ENCODE measurements at regions of chr20 and their contacts with region 1.

Region 1: GRCh38 chr20:51206032-51206662 is 183.2 kb upstream of the KCNG1 start:
- DNase-seq: no peak
- H3K4me3 ChIP-seq: no peak overlapping the region
- H3K27ac ChIP-seq: no peak overlapping the region
- H3K4me1 ChIP-seq: no peaks in the 10 kb centered on the region
- H3K27me3 ChIP-seq: no peaks in the 10 kb centered on the region
- CTCF ChIP-seq: no peak
- POLR2A ChIP-seq: no peak

Region 2: DNA sequence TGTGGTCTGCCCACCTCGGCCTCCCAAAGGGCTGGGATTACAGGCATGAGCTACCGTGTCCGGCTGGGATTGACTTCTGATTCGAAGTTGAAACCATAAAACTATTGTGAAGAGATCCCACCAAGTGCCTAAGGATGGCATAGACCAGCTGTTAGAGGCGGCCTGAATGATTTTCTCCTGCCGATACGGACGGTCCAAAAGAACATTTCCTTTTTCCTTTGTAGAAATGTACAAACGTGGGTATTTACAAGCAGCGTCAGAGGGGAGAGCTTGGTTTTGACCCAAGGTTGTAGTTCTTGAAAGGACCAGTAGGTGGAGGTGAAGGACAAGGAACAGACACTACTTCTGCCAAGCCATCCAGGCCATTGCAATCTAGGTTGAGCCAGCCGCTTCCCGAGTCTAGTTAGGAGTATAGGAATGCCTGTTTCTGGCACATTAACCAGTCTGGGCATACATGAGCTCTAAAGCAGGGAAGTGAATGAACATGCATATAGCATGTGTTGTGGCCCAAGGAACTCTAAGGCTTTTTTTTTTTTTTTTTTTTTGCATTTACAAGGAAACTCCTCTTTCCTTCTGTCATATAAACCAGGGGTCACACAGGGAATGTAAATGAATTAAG is 218.4 kb before region 1 on chr20:
- intact Hi-C with region 1: loop called (anchors 10 kb)
- DNase-seq: peak; percentile 61 to 73
- H3K4me3 ChIP-seq: no peak overlapping the region
- H3K27ac ChIP-seq: no peak overlapping the region
- H3K4me1 ChIP-seq: no peaks in the 10 kb centered on the region
- H3K27me3 ChIP-seq: peaks cover 0 to 5% of the 10 kb centered on the region in 2 donors
- CTCF ChIP-seq: peak; percentile 93 to 96 (median 94)
- POLR2A ChIP-seq: no peak

Measured in breast epithelium (tissue), 4 donors.